Calu3 (cell line): ENCODE measurements at regions of chr10 and their contacts with region 1.

Region 1: DNA sequence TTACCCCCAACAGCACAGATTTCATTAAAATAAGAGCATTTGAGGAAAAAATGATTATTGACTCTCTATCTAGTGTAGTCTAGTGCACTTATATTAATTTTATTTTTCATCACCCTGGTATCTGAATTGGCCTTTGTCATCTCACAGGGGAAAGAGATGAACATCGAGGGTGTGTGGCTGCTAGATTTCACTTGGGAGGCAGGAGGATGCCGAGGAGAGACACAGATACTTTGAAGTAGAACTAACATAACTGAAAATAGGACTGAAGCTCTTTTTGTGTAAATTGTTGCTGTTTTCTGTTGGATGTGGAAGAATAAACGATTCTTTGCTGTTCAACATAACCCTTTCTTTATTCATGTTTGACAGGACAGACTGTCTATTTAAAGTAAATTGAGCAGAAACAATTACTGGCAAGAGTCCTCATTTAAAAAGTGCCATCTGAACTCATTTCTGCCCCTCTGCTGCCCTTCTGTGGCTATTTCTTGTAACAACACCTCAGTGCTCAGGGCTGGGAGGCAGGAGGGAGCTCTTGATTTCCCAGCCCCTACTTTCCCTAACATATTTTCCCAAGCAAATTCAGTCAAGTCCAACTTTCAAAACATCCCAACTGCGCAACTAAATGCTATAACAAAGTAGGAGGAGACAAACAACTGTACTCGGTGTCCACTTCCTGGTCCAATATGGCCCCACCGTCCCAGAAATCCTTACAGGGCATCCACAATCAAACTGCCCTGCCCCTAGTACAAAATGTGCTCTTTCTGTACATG is 15.6 kb downstream of the LYZL1 start:
- DNase-seq: peak; percentile 60
- H3K4me3 Mint-ChIP-seq: no peak overlapping the region
- H3K27ac Mint-ChIP-seq: peak overlapping the region; percentile 30
- H3K4me1 Mint-ChIP-seq: peaks cover 6% of the 10 kb centered on the region
- H3K27me3 Mint-ChIP-seq: no peaks in the 10 kb centered on the region
- CTCF ChIP-seq: peak; percentile 70

Region 2: GRCh38 chr10:28628184-28628893 is 676.1 kb before region 1 on chr10:
- CTCF ChIA-PET with region 1: interaction called, 9 read pairs
- intact Hi-C with region 1: loop called (anchors 1 kb)
- DNase-seq: peak; percentile 86
- H3K4me3 Mint-ChIP-seq: no peak overlapping the region
- H3K27ac Mint-ChIP-seq: no peak overlapping the region
- H3K4me1 Mint-ChIP-seq: peaks cover 21% of the 10 kb centered on the region
- H3K27me3 Mint-ChIP-seq: no peaks in the 10 kb centered on the region
- CTCF ChIP-seq: peak; percentile 89

Region 3: DNA sequence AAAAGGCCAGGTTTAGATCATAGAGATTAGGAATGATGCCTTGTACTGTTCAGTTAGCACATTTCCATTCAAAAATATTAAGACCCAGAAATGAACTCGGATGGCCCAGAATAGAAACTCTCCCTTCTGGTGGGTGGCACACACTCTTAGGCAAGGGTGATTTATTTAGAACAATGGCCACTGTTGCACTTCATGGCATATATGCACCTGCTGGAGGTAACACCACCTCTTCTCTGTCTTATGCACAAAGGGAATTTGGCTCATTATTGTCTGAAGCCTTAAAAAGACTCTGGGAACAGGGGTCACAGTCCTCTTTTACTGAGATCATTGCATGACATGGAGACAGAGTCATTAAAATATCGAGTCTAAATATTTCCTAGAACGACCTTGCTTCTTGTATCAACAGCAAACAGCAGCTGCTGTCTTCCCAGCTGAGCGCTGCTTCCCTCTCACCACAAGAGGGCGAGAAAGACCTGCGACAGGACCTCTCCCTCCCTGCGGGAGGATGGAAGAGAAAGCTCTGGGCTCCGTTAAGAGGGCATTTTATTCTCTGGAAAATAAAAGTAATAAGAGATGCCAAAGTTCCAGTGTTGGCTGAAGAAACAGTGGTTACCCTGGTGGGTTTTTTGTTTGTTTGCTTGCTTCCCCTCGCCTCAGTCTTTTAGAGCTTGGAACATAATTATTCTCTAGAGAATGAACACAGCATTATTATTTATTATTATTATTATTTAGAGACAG is 640.7 kb before region 1 on chr10:
- CTCF ChIA-PET with region 1: interaction called, 9 read pairs
- intact Hi-C with region 1: loop called (anchors 1 kb)
- DNase-seq: peak; percentile 80
- H3K4me3 Mint-ChIP-seq: no peak overlapping the region
- H3K27ac Mint-ChIP-seq: no peak overlapping the region
- H3K4me1 Mint-ChIP-seq: peaks cover 47% of the 10 kb centered on the region
- H3K27me3 Mint-ChIP-seq: peaks cover 10% of the 10 kb centered on the region
- CTCF ChIP-seq: peak; percentile 76

Region 4: DNA sequence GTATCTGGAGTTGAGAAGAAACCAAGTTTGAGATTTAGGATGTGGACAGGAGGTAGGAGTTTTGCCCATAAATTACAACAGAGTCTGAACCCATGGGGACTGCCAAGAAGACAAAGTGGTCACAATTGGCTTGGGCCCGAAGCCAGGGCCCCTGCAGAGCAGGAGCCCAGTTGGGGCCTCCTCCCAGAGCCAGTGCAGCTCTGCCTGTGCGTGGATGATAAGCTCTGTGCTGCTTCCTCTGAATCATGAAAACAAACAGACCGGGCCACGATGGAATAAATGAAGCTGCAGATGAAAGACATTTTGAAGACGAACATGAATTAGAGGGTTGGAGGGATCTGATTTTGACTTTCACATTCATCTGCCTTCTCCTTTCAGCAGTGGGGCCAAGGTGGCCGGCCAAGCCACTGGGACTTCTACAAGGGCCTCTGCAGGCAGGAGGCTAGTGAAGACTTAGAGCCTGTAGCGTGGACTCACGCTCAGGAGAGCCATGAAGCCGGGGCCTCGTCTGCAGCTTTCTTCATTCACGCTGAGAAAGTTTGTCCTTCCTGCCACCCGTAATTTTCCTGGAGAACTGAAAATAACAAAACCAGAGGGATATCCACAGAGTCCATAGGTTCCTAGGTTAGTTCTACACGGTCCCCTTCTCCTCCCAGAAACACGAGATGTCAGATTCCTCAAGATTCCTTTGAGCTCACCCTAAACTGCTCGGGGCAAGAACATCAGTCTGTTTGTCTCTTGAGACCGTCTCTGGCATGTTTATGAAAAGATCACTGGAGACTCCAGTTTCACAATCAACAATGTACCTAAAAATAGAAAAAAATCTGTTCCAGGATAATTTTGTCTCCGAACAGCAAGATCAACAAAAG is 172.3 kb before region 1 on chr10:
- CTCF ChIA-PET with region 1: interaction called, 3 read pairs
- intact Hi-C with region 1: loop called (anchors 1 kb)
- DNase-seq: no peak
- H3K4me3 Mint-ChIP-seq: no peak overlapping the region
- H3K27ac Mint-ChIP-seq: no peak overlapping the region
- H3K4me1 Mint-ChIP-seq: peaks cover 9% of the 10 kb centered on the region
- H3K27me3 Mint-ChIP-seq: no peaks in the 10 kb centered on the region
- CTCF ChIP-seq: no peak

Region 5: DNA sequence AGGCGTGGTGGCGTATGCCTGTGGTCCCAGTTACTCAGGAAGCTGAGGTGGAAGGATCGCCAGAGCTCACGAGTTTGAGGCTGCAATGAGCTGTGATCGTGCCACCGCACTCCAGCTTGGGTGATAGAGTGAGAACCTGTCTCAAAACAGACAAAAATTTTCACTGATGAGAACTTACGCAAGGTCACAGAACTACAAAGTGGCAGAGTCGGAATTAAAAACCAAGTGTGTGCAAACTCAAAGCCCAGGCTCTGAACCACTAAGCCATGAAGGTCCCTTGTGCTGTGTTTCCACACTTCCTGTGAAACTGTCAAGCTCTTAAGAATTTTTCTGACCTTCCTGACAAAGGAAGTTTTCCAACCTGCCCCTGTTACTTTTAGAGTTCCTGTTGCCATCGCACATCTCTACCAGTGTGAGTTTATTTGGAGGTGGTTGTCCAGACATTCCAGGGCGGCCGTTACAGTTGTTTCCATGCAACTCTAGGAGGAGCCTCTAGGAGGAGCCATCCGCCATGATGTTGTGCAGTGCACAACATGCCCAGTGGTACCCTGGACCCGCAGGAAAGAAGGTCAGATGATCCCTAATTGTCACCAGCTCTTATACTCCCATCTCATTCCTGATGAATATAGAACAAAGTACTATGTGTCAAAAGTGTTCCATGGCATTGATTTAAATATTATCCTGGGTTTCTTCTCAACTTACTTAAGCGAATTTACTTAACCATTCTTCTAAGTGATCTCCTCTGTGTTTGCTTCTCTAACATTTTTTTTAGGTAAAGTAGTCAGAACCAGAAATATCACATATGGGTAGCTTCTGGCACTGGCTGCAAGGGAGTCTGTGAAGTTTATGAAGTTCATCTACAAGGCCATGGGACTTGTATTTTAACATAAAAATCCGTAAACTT is 64.6 kb before region 1 on chr10:
- CTCF ChIA-PET with region 1: interaction called, 5 read pairs
- intact Hi-C with region 1: loop called (anchors 5 kb)
- DNase-seq: peak; percentile 53
- H3K4me3 Mint-ChIP-seq: no peak overlapping the region
- H3K27ac Mint-ChIP-seq: no peak overlapping the region
- H3K4me1 Mint-ChIP-seq: no peaks in the 10 kb centered on the region
- H3K27me3 Mint-ChIP-seq: peaks cover 34% of the 10 kb centered on the region
- CTCF ChIP-seq: peak; percentile 59

Region 6: DNA sequence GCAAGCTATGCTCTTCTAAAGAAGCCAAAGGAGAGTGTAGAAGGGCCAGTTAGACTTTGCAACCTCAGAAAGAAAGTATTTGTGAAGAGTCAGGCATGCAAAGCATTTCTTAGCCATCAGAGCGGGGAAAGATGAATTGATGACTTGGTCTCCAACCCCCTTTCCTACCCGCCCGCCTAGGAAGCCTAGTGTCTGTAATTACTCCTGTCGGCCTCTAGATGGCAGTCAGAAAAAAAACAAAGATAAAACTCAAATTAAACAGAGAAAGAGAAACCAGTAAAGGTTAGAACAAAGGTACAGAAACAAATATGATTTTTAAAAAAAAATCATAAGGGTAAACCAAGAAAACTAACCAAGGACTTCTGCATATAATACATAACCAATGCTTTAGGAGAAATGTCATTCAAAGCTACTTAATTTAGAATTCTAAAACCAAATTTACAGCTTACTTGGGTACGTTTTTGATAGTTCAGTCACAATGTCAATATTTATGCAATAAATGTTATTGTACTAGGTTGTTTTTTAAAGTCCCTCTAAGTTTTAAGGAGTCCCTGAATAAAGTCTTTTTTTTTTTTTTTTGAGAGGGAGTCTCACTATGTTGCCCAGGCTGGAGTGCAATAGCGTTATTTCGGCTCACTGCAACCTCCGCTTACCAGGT is 82.0 kb after region 1 on chr10:
- CTCF ChIA-PET with region 1: no interaction called
- intact Hi-C with region 1: loop called (anchors 5 kb)
- DNase-seq: peak; percentile 17
- H3K4me3 Mint-ChIP-seq: no peak overlapping the region
- H3K27ac Mint-ChIP-seq: no peak overlapping the region
- H3K4me1 Mint-ChIP-seq: no peaks in the 10 kb centered on the region
- H3K27me3 Mint-ChIP-seq: peaks cover 60% of the 10 kb centered on the region
- CTCF ChIP-seq: peak; percentile 50